ENCODE measurements at regions of chr9 and their contacts with region 1.

Region 1: GRCh38 chr9:35553670-35554543 is 51.2 kb upstream of the TESK1 start:
- DNase-seq: peak; percentile 47
- H3K4me3 ChIP-seq: no peak overlapping the region
- H3K27ac ChIP-seq: no peak overlapping the region
- H3K4me1 ChIP-seq: peaks cover 7% of the 10 kb centered on the region
- H3K27me3 ChIP-seq: no peaks in the 10 kb centered on the region
- CTCF ChIP-seq: peak; percentile 88 to 91

Region 2: GRCh38 chr9:35385042-35385441 is 168.9 kb before region 1 on chr9:
- CTCF ChIA-PET with region 1: no interaction called
- dilution Hi-C with region 1: loop called (anchors 5 kb)
- in situ Hi-C with region 1: no loop called
- intact Hi-C with region 1: no loop called
- DNase-seq: peak; percentile 14
- H3K4me3 ChIP-seq: no peak overlapping the region
- H3K27ac ChIP-seq: no peak overlapping the region
- H3K4me1 ChIP-seq: no peaks in the 10 kb centered on the region
- H3K27me3 ChIP-seq: no peaks in the 10 kb centered on the region
- CTCF ChIP-seq: peak; percentile 6 to 34

Region 3: DNA sequence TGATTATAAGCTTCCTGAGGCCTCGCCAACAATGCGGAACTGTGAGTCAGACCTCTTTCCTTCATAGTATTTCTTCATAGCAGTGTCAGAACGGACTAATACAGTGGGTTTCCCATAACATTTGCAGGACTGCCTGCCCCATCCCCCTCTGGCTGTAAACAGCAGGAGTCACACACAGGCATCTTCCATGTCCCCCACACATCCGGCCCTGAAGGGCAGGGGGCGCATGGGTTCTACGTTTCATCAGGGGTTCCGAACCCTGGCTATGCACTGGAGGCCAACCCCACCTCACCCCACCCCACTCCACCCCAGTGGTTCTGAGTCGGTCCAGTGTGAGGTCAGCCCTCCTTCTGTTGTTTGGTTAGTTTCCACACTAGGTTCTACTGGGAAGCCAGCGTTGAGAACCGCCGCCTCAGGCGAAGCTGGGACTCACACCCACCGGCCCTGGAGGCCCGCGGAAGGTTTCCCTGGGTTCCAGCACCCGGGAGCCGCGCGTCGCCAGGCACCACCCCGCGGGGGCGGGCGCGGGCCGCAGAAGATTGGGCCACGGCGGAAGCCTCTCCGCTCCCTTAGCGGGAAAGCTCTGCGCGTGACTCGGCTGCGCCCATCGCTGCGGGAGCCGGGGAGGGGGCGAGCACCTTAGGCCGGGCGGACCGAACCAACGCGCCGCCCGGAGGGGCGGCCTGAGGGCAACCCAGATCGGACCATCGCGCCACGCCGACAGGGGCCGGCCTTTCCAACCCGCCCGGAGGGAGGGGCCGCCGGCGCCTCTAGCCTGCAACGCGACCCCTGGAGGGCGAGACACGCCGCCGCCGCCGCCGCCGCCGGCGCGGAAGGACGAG is 64.4 kb before region 1 on chr9 and contains the start of gene RUSC2:
- CTCF ChIA-PET with region 1: interaction called, 5 read pairs
- dilution Hi-C with region 1: no loop called
- in situ Hi-C with region 1: loop called (anchors 5 kb)
- intact Hi-C with region 1: loop called (anchors 1 kb)
- DNase-seq: peak; percentile 81
- H3K4me3 ChIP-seq: peak within 1 kb of the TSS; percentile 82 to 96 (median 92)
- H3K27ac ChIP-seq: peak within 1 kb of the TSS; percentile 47
- H3K4me1 ChIP-seq: peaks cover 20% of the 10 kb centered on the region
- H3K27me3 ChIP-seq: no peaks in the 10 kb centered on the region
- CTCF ChIP-seq: peak; percentile 13 to 26
- total RNA-seq, gene RUSC2: 27.3 to 30.0 TPM

Region 4: GRCh38 chr9:35518226-35518821 is 35.6 kb before region 1 on chr9:
- CTCF ChIA-PET with region 1: no interaction called
- dilution Hi-C with region 1: loop called (anchors 5 kb)
- in situ Hi-C with region 1: no loop called
- intact Hi-C with region 1: loop called (anchors 2 kb)
- DNase-seq: peak; percentile 86
- H3K4me3 ChIP-seq: no peak overlapping the region
- H3K27ac ChIP-seq: peak overlapping the region; percentile 79
- H3K4me1 ChIP-seq: peaks cover 74% of the 10 kb centered on the region
- H3K27me3 ChIP-seq: no peaks in the 10 kb centered on the region
- CTCF ChIP-seq: no peak